ENCODE measurements at regions of chr1 and their contacts with region 1.

Region 1: DNA sequence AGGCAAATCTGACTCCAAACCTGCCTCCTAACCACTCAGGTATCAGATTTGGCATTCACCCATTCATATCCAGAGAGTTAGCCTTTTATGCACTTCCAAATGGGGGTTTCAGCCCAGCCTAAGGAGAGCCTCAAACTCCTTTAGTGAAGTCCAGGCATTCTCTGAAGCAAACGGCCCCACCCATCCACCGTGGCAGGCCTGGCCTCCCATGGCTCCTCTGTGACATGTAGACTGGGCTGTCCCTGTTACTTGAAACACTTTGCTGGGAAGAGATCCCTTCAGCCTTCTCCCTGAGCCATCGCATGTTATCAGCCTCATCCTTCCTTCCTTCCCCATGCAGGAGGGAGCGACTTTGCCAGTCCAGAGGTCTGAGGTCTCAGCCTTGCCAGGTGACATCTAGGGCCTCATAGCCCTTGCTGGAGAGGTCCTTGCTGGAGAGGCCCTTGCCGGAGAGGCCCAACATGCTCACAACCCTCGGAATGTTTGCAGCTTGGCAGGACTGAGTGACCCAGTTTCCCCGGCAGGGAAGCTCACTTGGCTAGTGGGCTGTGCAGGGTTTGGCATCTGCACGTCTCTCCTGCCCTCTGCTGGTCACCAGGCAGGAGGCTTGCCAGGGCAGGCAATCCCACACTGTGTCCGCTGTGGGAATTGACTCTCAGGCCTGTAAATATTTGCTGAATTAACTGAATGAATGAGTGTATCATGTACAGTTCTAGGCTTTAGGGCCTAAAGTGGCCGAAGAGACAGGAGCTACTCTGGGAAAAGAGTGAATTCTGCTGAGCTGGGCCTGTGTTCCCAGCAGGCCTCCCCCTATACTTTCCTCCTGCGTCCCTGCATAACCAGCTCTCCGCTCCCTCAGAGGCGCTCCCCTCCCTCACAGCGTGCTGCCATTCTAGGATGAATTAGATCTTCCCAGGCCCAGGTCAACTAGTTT is 26.7 kb upstream of the RBM15 start:
- DNase-seq: peak; percentile 25 to 84
- H3K4me3 ChIP-seq: peak overlapping the region in 3 of 4 experiments; percentile 6 to 46 (median 29); a peak in 5 of 8 replicates
- H3K27ac ChIP-seq: no peak overlapping the region
- H3K4me1 ChIP-seq: peaks cover 0 to 7% (median 4%) of the 10 kb centered on the region in 4 experiments; a peak in 5 of 7 replicates
- H3K27me3 ChIP-seq: no peaks in the 10 kb centered on the region; a peak in 1 of 7 replicates
- CTCF ChIP-seq: peak; percentile 97 to 98 (median 98)
- EP300 ChIP-seq: no peak
- POLR2A ChIP-seq: no peak
- RAD21 ChIP-seq: peak; percentile 97 to 98

Region 2: DNA sequence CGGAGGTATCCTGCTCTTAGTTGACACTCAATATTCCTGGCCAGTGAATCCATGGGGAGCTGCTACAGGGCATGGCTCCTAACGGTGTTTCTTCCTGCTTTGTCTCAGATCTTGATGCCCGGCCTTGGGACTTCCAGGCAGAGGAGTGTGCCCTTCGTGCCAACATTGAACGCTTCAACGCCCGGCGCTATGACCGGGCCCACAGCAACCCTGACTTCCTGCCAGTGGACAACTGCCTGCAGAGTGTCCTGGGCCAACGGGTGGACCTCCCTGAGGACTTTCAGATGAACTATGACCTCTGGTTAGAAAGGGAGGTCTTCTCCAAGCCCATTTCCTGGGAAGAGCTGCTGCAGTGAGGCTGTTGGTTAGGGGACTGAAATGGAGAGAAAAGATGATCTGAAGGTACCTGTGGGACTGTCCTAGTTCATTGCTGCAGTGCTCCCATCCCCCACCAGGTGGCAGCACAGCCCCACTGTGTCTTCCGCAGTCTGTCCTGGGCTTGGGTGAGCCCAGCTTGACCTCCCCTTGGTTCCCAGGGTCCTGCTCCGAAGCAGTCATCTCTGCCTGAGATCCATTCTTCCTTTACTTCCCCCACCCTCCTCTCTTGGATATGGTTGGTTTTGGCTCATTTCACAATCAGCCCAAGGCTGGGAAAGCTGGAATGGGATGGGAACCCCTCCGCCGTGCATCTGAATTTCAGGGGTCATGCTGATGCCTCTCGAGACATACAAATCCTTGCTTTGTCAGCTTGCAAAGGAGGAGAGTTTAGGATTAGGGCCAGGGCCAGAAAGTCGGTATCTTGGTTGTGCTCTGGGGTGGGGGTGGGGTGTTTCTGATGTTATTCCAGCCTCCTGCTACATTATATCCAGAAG is 258.7 kb before region 1 on chr1:
- CTCF ChIA-PET with region 1: no interaction called
- POLR2A ChIA-PET with region 1: no interaction called
- DNase-seq: peak in 1 of 2 experiments; percentile 97
- H3K4me3 ChIP-seq: no peak overlapping the region
- H3K27ac ChIP-seq: no peak overlapping the region
- H3K4me1 ChIP-seq: no peaks in the 10 kb centered on the region
- H3K27me3 ChIP-seq: no peaks in the 10 kb centered on the region
- CTCF ChIP-seq: peak; percentile 87 to 99 (median 99)
- EP300 ChIP-seq: no peak
- POLR2A ChIP-seq: no peak
- RAD21 ChIP-seq: peak; percentile 91 to 96

Region 3: DNA sequence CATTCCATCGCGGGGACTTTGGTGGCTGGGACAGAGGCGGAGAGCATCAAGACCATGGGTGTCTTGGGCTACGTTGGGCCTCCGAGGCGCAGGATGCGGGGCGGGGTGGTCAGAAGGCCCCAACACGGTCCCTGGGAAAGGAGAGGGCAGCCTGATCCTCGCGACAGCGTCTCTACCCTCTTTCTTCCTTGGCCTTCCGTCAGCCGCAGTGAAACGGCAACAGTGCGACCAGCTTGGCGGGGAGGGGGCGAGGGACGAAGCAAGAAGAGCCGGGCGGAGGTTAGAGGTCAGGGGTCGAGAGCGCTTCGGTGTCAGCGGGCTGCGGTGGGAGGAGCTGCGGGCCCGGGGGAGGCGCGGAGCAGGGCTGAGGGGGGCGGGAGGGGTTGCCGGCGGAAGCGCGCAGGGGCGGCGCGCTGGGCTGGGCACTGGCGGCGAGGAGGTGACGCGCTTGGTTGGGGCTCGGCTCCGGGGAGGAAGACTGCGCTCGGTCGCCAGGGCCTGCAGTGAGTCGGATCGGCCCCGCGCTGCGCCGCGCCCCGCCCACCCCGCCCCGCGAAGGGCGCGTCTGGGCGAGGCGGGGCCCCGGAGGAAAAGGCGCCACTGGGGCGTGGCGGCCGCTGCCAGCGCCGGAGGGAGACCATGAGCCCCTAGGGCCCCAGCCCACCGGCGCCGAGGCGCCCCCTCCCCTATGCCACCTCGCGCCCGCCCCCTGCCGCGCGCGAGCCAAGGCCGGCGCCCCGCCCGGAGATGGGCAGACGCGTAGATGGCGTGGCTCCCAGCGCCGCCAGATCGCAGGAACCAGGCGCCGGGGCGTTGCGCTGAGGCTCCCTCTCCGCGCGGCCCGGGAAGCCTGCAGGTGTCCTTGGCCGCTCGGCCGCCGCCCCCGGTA is 102.5 kb before region 1 on chr1 and contains the start of gene KCNC4:
- CTCF ChIA-PET with region 1: interaction called, 1,001 read pairs
- POLR2A ChIA-PET with region 1: interaction called, 12 read pairs
- DNase-seq: peak; percentile 72 to 85
- H3K4me3 ChIP-seq: peak within 1 kb of the TSS; percentile 41 to 78 (median 62)
- H3K27ac ChIP-seq: no peak within 1 kb of the TSS
- H3K4me1 ChIP-seq: peaks cover 7 to 23% (median 20%) of the 10 kb centered on the region in 4 experiments
- H3K27me3 ChIP-seq: peaks cover 5 to 22% (median 21%) of the 10 kb centered on the region in 4 experiments
- CTCF ChIP-seq: no peak
- EP300 ChIP-seq: peak in 1 of 2 experiments; percentile 85; a peak in 1 of 3 replicates
- POLR2A ChIP-seq: peak in 1 of 2 experiments; percentile 38; a peak in 1 of 3 replicates
- RAD21 ChIP-seq: no peak
- total RNA-seq, gene KCNC4: 11.2 TPM in 2 replicates

Region 4: GRCh38 chr1:110235834-110236682 is 76.4 kb before region 1 on chr1:
- CTCF ChIA-PET with region 1: interaction called, 13 read pairs
- POLR2A ChIA-PET with region 1: interaction called, 6 read pairs
- DNase-seq: no peak
- H3K4me3 ChIP-seq: no peak overlapping the region
- H3K27ac ChIP-seq: no peak overlapping the region
- H3K4me1 ChIP-seq: peaks cover 0 to 9% (median 3%) of the 10 kb centered on the region in 4 experiments; a peak in 3 of 7 replicates
- H3K27me3 ChIP-seq: no peaks in the 10 kb centered on the region; a peak in 1 of 7 replicates
- CTCF ChIP-seq: no peak
- EP300 ChIP-seq: no peak
- POLR2A ChIP-seq: no peak
- RAD21 ChIP-seq: no peak

Region 5: DNA sequence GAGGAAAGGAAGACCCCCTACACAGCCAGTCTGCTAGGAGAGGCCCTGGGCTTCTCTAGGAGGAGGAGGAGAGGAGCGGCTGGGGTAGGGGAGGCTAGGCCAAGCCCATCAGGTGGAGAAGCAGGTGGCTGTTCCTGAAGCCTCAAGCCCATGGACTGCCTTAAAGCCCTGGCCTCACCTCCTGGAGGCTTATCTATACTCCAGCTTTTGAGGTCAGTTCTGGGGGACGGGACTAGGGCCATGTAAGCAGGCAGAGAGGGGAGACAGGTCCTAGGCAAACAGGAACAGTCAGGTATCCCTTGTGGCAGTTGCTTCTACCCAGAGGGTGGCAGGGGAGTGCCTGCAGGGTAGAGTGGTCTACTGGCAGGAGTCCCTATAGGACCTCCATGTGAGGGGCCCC is 61.7 kb before region 1 on chr1:
- CTCF ChIA-PET with region 1: interaction called, 21 read pairs
- POLR2A ChIA-PET with region 1: interaction called, 3 read pairs
- DNase-seq: no peak
- H3K4me3 ChIP-seq: no peak overlapping the region
- H3K27ac ChIP-seq: no peak overlapping the region
- H3K4me1 ChIP-seq: no peaks in the 10 kb centered on the region; a peak in 1 of 7 replicates
- H3K27me3 ChIP-seq: no peaks in the 10 kb centered on the region
- CTCF ChIP-seq: no peak
- EP300 ChIP-seq: no peak
- POLR2A ChIP-seq: no peak
- RAD21 ChIP-seq: no peak

Region 6: GRCh38 chr1:110281363-110282290 is 30.8 kb before region 1 on chr1:
- CTCF ChIA-PET with region 1: interaction called, 23 read pairs
- POLR2A ChIA-PET with region 1: no interaction called
- DNase-seq: no peak
- H3K4me3 ChIP-seq: no peak overlapping the region
- H3K27ac ChIP-seq: no peak overlapping the region
- H3K4me1 ChIP-seq: peaks cover 0 to 3% (median 0%) of the 10 kb centered on the region in 4 experiments; a peak in 2 of 7 replicates
- H3K27me3 ChIP-seq: no peaks in the 10 kb centered on the region
- CTCF ChIP-seq: no peak
- EP300 ChIP-seq: no peak
- POLR2A ChIP-seq: no peak
- RAD21 ChIP-seq: no peak

Region 7: DNA sequence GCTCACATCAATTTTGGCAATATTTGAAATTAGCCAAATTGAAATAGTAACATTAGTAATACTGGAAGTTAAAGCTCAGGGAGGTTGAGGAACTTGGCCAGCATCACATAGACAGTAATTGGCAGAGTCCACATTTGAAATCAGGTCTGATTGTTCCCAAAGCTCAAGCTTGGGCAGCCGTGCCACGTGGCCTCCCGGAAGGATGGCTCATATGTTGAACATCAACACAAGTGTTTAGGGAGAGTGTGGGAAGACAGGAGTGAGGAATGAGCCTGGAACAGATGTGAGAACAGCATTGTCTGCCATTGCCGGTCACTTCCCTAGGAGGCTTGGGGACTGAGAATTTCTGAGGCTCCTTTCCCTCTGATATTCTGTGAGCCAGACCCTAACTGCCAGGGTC is 13.5 kb before region 1 on chr1:
- CTCF ChIA-PET with region 1: interaction called, 34 read pairs
- POLR2A ChIA-PET with region 1: interaction called, 3 read pairs
- DNase-seq: no peak
- H3K4me3 ChIP-seq: no peak overlapping the region
- H3K27ac ChIP-seq: no peak overlapping the region
- H3K4me1 ChIP-seq: no peaks in the 10 kb centered on the region
- H3K27me3 ChIP-seq: no peaks in the 10 kb centered on the region
- CTCF ChIP-seq: no peak
- EP300 ChIP-seq: no peak
- POLR2A ChIP-seq: no peak
- RAD21 ChIP-seq: no peak

Region 8: DNA sequence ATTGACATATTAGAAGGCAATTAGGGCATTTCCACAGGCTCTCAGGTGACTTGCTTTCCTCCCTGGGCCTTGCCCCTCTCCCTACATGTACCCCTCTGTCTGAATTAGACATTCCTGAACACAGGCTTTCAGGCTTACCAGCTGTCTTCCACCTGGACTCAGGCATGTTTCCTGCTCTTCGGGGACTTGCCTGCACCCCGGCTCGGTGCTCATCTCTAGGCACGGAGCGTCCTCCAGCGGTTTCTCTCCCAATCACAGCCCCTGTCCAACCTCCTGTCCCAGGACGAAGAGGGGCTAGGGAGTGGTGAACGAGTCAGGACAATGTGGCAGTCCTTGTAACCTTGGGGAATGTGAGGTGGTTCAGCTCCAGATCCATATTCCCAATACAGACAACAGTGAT is 142.7 kb after region 1 on chr1:
- CTCF ChIA-PET with region 1: interaction called, 30 read pairs
- POLR2A ChIA-PET with region 1: no interaction called
- DNase-seq: peak in 1 of 2 experiments; percentile 73
- H3K4me3 ChIP-seq: no peak overlapping the region
- H3K27ac ChIP-seq: no peak overlapping the region
- H3K4me1 ChIP-seq: peaks cover 0 to 3% (median 2%) of the 10 kb centered on the region in 4 experiments; a peak in 4 of 7 replicates
- H3K27me3 ChIP-seq: no peaks in the 10 kb centered on the region
- CTCF ChIP-seq: peak; percentile 80 to 91 (median 84)
- EP300 ChIP-seq: no peak
- POLR2A ChIP-seq: no peak
- RAD21 ChIP-seq: peak; percentile 96 to 98